ENCODE measurements at regions of chr12 and their contacts with region 1.

Region 1: GRCh38 chr12:8609061-8609570 is 3.5 kb downstream of the AICDA start:
- DNase-seq: peak in 1 of 10 donors; percentile 21
- H3K4me3 ChIP-seq: no peak overlapping the region
- H3K27ac ChIP-seq: no peak overlapping the region
- H3K27me3 ChIP-seq: peaks cover 0 to 7% (median 0%) of the 10 kb centered on the region in 45 donors
- CTCF ChIP-seq: peak; percentile 41 to 82 (median 70)

Region 2: DNA sequence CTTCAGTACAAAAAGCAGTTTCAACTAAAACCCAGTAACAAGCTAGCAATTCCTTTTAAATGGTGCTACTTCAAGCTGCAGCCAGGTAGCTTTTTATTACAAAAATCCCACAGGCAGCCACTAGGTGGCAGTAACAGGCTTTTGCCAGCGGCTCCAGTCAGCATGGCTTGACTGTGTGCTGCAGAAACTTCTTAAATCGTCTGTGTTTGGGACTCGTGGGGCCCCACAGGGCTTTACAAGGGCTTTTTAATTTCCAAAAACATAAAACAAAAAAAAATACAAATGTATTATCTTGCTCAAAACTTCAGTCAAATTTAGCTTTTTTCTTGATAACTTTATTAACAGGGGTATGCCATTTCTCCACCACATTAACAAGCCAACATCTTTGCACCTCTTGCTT is 64.8 kb before region 1 on chr12:
- intact Hi-C with region 1: loop called (anchors 2 to 5 kb)
- DNase-seq: peak in 8 of 10 donors; percentile 36 to 77 (median 59)
- H3K4me3 ChIP-seq: no peak overlapping the region
- H3K27ac ChIP-seq: no peak overlapping the region
- H3K27me3 ChIP-seq: peaks cover 0 to 3% (median 0%) of the 10 kb centered on the region in 45 donors
- CTCF ChIP-seq: peak; percentile 76 to 99 (median 92)